Transverse colon (tissue), 4 donors: ENCODE measurements at regions of chr3 and their contacts with region 1.

Region 1: DNA sequence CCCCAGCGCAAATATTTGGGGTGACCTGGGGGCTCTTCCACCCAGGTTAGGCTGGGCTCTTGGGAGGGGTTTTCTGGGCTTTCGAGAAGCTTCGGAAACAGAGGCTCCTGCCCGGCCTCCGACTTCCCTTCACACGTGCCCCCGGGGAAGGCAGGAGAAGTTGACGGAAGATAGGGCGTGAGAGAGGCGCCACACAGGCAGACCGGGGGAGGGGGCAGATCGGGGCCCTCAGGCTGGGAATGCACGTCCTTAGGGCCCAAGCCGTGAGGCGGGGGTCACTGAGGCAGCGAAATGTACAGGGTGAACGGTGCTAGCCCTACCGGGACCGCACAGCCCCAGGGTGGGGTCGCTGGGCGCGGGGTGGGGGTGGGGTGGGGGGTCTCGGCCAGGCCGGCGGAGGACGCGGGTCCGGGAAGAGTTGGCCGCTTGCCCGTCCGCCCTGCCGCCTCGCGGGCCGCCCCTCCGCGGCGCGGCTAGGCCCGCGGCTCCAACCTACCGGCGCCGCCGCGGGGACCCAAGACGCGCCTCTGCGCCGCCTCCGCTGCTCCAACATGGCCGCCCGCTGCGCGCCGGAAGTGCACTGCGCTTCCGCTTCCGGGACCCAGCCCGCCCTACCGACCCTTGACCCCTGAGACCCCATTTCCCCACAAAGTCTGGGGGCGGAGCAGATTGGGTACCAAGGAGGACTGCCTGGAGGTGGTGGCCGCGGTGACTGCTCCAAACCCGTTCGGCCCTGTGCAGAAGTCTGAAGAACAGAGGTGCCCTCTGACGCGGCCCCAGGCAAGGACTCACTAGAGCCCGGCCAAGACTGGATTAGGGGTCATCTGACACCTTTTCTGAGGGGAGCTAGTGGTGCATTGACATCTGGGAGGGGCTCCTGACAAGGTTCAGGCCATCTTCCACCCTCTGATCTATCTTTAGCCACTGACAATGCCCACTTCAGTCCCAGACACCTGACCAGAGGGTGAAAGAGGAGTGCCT is at the start of gene CCDC71:
- DNase-seq: peak; percentile 73
- H3K4me3 ChIP-seq: peak within 1 kb of the TSS; percentile 75 to 100 (median 90)
- H3K27ac ChIP-seq: peak within 1 kb of the TSS; percentile 82 to 92 (median 90)
- H3K4me1 ChIP-seq: peaks cover 15 to 27% (median 23%) of the 10 kb centered on the region in 4 donors
- H3K27me3 ChIP-seq: no peaks in the 10 kb centered on the region
- CTCF ChIP-seq: no peak
- EP300 ChIP-seq: no peak
- POLR2A ChIP-seq: no peak
- total RNA-seq, gene CCDC71: 26.2 to 33.9 (median 31.3) TPM

Region 2: DNA sequence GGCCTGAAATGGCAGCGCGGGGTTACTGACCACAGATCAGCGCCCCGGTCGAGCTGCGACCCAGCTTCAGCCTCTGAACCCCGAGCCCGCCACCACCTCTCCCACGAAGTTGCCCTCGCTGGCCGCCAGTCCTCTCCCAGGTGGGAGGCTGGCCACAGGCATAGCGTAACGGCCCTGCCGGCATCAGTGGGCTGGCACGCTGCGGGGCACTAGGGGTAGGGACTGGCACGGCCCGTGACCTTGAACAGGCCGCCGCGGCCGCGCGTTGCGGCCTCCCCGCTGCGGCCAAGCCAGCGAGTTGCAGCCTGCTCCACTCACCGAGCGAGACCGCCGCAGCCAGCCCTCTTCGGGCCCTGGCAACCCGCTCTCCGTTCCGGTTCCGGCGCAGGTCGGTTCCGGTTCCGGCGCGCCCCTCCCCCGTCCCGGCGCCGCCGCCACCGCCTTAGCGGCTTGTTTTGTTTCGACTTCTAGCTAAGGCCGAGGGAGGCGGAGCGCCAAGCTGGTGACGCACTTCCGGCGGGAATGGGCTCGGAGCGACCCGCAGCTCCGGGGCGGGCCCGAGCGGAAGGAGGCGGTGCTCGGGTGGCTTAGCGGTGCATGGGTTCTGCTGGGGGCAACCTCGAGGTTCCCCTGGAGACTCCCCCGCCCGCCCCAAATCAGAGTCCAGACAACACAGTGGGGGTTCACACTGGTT is 45.5 kb before region 1 on chr3 and contains the start of gene USP19:
- in situ Hi-C with region 1: loop called in 1 of 4 experiments (anchors 5 kb)
- intact Hi-C with region 1: no loop called
- DNase-seq: peak; percentile 97
- H3K4me3 ChIP-seq: peak within 1 kb of the TSS; percentile 64 to 86 (median 78)
- H3K27ac ChIP-seq: peak within 1 kb of the TSS; percentile 89 to 98 (median 94)
- H3K4me1 ChIP-seq: peaks cover 8 to 18% (median 13%) of the 10 kb centered on the region in 4 donors
- H3K27me3 ChIP-seq: no peaks in the 10 kb centered on the region
- CTCF ChIP-seq: peak in 2 of 5 experiments; percentile 22 to 35
- EP300 ChIP-seq: no peak
- POLR2A ChIP-seq: peak; percentile 90
- total RNA-seq, gene USP19: 66.5 to 86.2 (median 71.7) TPM

Region 3: DNA sequence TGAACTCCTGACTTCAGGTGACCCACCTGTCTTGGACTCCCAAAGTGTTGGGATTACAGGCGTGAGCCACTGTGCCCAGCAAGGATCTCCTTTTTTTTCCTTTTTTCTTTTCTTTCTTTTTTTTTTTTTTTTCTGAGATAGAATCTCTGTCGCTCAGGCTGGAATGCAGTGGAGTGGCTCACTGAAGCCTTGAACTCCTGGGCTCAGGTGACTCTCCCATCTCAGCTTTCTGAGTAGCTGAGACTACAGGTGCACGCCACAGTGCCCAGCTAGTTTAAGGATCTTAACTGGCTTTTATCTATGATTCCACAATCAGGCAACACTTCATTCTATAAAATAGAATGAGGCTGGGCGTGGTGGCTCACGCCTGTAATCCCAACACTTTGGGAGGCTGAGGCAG is 279.3 kb after region 1 on chr3:
- in situ Hi-C with region 1: loop called in 3 of 4 experiments (anchors 10 to 25 kb)
- intact Hi-C with region 1: loop called (anchors 10 kb)
- DNase-seq: no peak
- H3K4me3 ChIP-seq: no peak overlapping the region
- H3K27ac ChIP-seq: no peak overlapping the region
- H3K4me1 ChIP-seq: peaks cover 0 to 17% (median 2%) of the 10 kb centered on the region in 4 donors
- H3K27me3 ChIP-seq: no peaks in the 10 kb centered on the region
- CTCF ChIP-seq: no peak
- EP300 ChIP-seq: no peak
- POLR2A ChIP-seq: no peak

Region 4: DNA sequence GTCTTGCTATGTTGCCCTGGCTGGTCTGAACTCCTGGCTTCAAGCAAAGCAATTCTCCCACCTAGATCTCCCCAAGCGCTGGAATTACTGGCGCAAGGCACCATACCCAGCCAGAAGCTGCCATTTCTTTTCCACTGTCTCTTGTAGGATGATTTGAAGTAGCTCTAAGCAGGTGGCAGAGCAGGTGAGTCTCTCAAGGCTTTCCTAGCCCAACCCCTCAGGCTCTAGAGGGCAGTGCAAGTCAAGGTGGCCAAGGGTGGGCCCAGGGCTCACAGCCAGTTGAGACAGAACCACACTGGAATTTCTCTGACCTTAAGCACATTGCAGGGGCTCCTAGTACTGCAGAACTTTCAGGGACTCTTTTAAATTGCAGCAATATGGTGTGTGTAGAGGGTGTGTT is 288.4 kb after region 1 on chr3:
- in situ Hi-C with region 1: loop called in 3 of 4 experiments (anchors 10 to 25 kb)
- intact Hi-C with region 1: loop called (anchors 10 kb)
- DNase-seq: no peak
- H3K4me3 ChIP-seq: no peak overlapping the region
- H3K27ac ChIP-seq: no peak overlapping the region
- H3K4me1 ChIP-seq: no peaks in the 10 kb centered on the region
- H3K27me3 ChIP-seq: no peaks in the 10 kb centered on the region
- CTCF ChIP-seq: peak in 1 of 5 experiments; percentile 7
- EP300 ChIP-seq: no peak
- POLR2A ChIP-seq: no peak